ENCODE measurements at regions of chr16 and their contacts with region 1.

Region 1: DNA sequence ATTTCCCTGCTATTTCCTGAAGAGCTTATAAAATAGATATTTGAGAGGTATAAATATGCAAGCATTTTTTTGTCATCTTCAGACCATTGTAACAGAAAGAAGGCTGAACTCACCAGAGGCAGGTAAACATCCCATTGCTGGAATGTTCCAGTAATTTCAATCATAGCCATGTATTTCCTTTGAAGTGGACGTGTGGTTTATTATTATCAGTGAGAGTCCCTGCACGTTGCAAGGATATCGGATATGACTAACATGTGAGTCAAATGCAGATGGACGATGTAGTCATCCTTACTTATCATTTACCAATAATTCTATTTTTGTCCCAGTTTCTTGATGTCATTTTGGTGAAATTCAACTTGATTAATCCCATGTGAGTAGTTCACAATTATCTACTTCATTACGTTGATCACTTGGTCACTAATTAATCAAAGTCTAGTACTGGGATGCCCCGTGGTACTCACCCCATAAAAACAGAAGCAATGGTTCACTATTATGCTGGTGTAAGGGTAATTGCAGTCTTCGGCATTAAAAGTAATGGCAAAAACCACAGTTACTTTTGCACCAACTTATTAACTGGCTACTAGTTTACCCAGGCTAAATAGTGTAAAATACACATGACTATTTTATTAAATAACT is 89.5 kb downstream of the VAT1L start:
- DNase-seq: peak; percentile 72
- H3K4me3 ChIP-seq: no peak overlapping the region
- H3K27ac ChIP-seq: no peak overlapping the region
- H3K4me1 ChIP-seq: no peaks in the 10 kb centered on the region
- H3K27me3 ChIP-seq: no peaks in the 10 kb centered on the region
- CTCF ChIP-seq: no peak

Region 2: DNA sequence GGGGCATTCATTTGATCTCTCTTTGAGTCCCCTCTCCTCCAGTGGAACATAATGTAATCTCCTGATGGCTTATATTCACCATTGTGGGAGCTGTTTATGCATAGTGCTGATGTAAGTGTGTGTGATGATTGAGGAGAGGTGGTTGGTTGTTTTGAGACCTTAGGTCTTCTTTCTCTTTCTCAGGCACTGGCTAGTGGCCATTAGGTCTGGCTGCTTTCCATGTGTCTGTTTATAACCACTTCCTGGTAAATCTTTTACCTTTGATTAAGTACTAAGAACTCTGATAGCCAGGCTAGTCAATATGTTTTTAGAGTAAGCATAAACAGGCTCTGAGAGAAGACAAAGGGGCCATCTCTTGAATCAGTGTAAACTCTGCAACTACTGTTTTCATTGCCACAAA is 61.5 kb before region 1 on chr16:
- CTCF ChIA-PET with region 1: no interaction called
- dilution Hi-C with region 1: no loop called
- in situ Hi-C with region 1: no loop called
- intact Hi-C with region 1: no loop called
- DNase-seq: no peak
- H3K4me3 ChIP-seq: no peak overlapping the region
- H3K27ac ChIP-seq: no peak overlapping the region
- H3K4me1 ChIP-seq: no peaks in the 10 kb centered on the region
- H3K27me3 ChIP-seq: no peaks in the 10 kb centered on the region
- CTCF ChIP-seq: no peak

Region 3: DNA sequence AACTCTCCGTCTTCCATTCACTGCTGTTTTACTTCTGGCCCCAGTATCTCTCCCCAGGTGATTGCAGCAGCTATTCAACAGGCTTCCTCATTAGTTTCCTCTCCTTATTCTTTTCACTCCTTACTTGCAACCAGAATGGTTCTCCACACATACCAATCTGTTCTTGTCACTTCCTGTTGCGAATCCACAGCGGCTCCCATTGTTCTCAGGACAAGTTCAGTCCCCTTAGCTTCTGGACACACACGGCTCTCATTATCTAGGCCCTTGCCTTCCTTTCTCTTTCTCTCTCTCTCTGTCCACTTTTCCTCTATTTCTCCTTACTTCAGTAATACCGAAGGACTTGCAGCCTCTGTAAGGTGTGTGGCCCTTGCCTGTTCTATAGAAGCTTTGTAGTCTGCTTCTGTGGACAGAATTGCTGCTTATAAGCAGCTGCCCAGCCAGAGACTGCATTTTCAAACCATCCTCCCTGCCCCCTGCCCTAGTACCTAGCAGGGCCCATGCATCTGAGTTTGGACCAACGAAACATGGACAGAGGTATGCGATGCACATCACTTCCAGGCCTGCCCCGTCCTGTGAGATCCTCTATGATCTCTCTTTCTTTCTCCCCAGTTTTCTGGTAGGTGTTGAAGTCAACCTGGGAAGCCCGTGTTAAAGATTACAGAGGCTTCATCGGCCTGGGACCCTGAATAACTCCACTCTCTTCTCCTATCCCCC is 43.8 kb before region 1 on chr16:
- CTCF ChIA-PET with region 1: no interaction called
- dilution Hi-C with region 1: loop called (anchors 5 kb)
- in situ Hi-C with region 1: no loop called
- intact Hi-C with region 1: no loop called
- DNase-seq: peak; percentile 84
- H3K4me3 ChIP-seq: no peak overlapping the region
- H3K27ac ChIP-seq: peak overlapping the region; percentile 27
- H3K4me1 ChIP-seq: peaks cover 9% of the 10 kb centered on the region
- H3K27me3 ChIP-seq: no peaks in the 10 kb centered on the region
- CTCF ChIP-seq: no peak

Region 4: GRCh38 chr16:78034525-78034924 is 156.7 kb after region 1 on chr16:
- CTCF ChIA-PET with region 1: no interaction called
- dilution Hi-C with region 1: no loop called
- in situ Hi-C with region 1: no loop called
- intact Hi-C with region 1: no loop called
- DNase-seq: peak; percentile 73
- H3K4me3 ChIP-seq: no peak overlapping the region
- H3K27ac ChIP-seq: no peak overlapping the region
- H3K4me1 ChIP-seq: no peaks in the 10 kb centered on the region
- H3K27me3 ChIP-seq: no peaks in the 10 kb centered on the region
- CTCF ChIP-seq: no peak

Measured in mammary epithelial cell (primary cell).